HepG2 (cell line): ENCODE measurements at regions of chr22 and their contacts with region 1.

Region 1: GRCh38 chr22:25942856-25943411 is 200.9 kb downstream of the MYO18B start:
- DNase-seq: no peak
- ATAC-seq: no peak; the same call in 2 of the 3 replicates
- H3K4me3 ChIP-seq: no peak overlapping the region
- H3K27ac ChIP-seq: no peak overlapping the region
- H3K4me1 ChIP-seq: no peaks in the 10 kb centered on the region
- H3K27me3 ChIP-seq: peaks cover 1 to 6% of the 10 kb centered on the region in 2 experiments; a peak in 1 of 5 replicates
- CTCF ChIP-seq: no peak
- EP300 ChIP-seq: no peak
- POLR2A ChIP-seq: no peak
- RAD21 ChIP-seq: no peak

Region 2: GRCh38 chr22:26008587-26008986 is 65.7 kb after region 1 on chr22:
- CTCF ChIA-PET with region 1: no interaction called
- POLR2A ChIA-PET with region 1: no interaction called
- in situ Hi-C with region 1: no loop called
- intact Hi-C with region 1: loop called (anchors 10 kb)
- DNase-seq: no peak
- ATAC-seq: no peak
- H3K4me3 ChIP-seq: no peak overlapping the region
- H3K27ac ChIP-seq: no peak overlapping the region
- H3K4me1 ChIP-seq: no peaks in the 10 kb centered on the region
- H3K27me3 ChIP-seq: no peaks in the 10 kb centered on the region
- CTCF ChIP-seq: no peak
- EP300 ChIP-seq: no peak
- POLR2A ChIP-seq: no peak
- RAD21 ChIP-seq: no peak

Region 3: DNA sequence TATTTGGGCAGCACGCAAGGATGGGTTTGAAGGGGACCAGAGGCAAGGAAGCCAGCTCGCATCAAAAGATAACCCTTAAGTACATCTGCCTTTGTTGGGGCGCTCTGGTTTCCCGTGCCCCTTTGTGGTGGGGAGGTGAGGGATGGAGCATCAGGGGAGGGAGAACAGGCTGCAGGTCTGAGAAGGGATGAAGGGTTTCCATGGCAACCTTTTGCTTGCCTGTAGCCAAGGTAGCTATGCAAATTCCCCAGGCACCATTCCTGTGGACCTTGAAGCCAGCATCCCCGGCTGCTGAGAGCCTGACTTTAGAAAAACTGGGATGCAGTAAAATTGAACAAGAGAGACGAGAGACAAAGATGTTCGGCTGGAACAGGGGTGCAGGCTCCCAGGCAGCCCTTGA is 302.1 kb after region 1 on chr22:
- CTCF ChIA-PET with region 1: no interaction called
- POLR2A ChIA-PET with region 1: no interaction called
- in situ Hi-C with region 1: no loop called
- intact Hi-C with region 1: no loop called
- DNase-seq: no peak
- ATAC-seq: no peak
- H3K4me3 ChIP-seq: no peak overlapping the region
- H3K27ac ChIP-seq: no peak overlapping the region
- H3K4me1 ChIP-seq: no peaks in the 10 kb centered on the region
- H3K27me3 ChIP-seq: no peaks in the 10 kb centered on the region; a peak in 1 of 5 replicates
- CTCF ChIP-seq: no peak
- EP300 ChIP-seq: no peak
- POLR2A ChIP-seq: no peak
- RAD21 ChIP-seq: no peak